A673 (cell line): ENCODE measurements at regions of chr7 and their contacts with region 1.

Region 1: GRCh38 chr7:69837387-69838068 is 239.3 kb downstream of the AUTS2 start:
- DNase-seq: peak; percentile 98
- H3K4me3 ChIP-seq: no peak overlapping the region
- H3K27ac ChIP-seq: peak overlapping the region; percentile 24
- H3K4me1 ChIP-seq: peaks cover 56% of the 10 kb centered on the region
- H3K27me3 ChIP-seq: no peaks in the 10 kb centered on the region
- CTCF ChIP-seq: no peak

Region 2: GRCh38 chr7:69598081-69598486 is 239.4 kb before region 1 on chr7 and contains the start of gene AUTS2:
- CTCF ChIA-PET with region 1: no interaction called
- POLR2A ChIA-PET with region 1: no interaction called
- intact Hi-C with region 1: loop called (anchors 5 kb)
- DNase-seq: peak; percentile 97
- H3K4me3 ChIP-seq: peak within 1 kb of the TSS; percentile 81
- H3K27ac ChIP-seq: peak within 1 kb of the TSS; percentile 66
- H3K4me1 ChIP-seq: peaks cover 10% of the 10 kb centered on the region
- H3K27me3 ChIP-seq: no peaks in the 10 kb centered on the region
- CTCF ChIP-seq: no peak
- total RNA-seq, gene AUTS2: 42.1 and 44.3 TPM in 2 replicates

Region 3: GRCh38 chr7:70092314-70093204 is 255.0 kb after region 1 on chr7:
- CTCF ChIA-PET with region 1: no interaction called
- POLR2A ChIA-PET with region 1: no interaction called
- intact Hi-C with region 1: loop called (anchors 10 kb)
- DNase-seq: peak; percentile 86
- H3K4me3 ChIP-seq: peak overlapping the region; percentile 21
- H3K27ac ChIP-seq: no peak overlapping the region
- H3K4me1 ChIP-seq: peaks cover 49% of the 10 kb centered on the region
- H3K27me3 ChIP-seq: peaks cover 43% of the 10 kb centered on the region
- CTCF ChIP-seq: no peak

Region 4: GRCh38 chr7:70165477-70166170 is 328.1 kb after region 1 on chr7:
- CTCF ChIA-PET with region 1: no interaction called
- POLR2A ChIA-PET with region 1: no interaction called
- intact Hi-C with region 1: loop called (anchors 10 kb)
- DNase-seq: no peak
- H3K4me3 ChIP-seq: no peak overlapping the region
- H3K27ac ChIP-seq: no peak overlapping the region
- H3K4me1 ChIP-seq: peaks cover 18% of the 10 kb centered on the region
- H3K27me3 ChIP-seq: no peaks in the 10 kb centered on the region
- CTCF ChIP-seq: no peak